GM18951 (cell line): ENCODE measurements at regions of chr16 and their contacts with region 1.

Region 1: GRCh38 chr16:30922960-30923535 is 324 bp upstream of the FBXL19 start:
- POLR2A ChIP-seq: peak; percentile 12

Region 2: DNA sequence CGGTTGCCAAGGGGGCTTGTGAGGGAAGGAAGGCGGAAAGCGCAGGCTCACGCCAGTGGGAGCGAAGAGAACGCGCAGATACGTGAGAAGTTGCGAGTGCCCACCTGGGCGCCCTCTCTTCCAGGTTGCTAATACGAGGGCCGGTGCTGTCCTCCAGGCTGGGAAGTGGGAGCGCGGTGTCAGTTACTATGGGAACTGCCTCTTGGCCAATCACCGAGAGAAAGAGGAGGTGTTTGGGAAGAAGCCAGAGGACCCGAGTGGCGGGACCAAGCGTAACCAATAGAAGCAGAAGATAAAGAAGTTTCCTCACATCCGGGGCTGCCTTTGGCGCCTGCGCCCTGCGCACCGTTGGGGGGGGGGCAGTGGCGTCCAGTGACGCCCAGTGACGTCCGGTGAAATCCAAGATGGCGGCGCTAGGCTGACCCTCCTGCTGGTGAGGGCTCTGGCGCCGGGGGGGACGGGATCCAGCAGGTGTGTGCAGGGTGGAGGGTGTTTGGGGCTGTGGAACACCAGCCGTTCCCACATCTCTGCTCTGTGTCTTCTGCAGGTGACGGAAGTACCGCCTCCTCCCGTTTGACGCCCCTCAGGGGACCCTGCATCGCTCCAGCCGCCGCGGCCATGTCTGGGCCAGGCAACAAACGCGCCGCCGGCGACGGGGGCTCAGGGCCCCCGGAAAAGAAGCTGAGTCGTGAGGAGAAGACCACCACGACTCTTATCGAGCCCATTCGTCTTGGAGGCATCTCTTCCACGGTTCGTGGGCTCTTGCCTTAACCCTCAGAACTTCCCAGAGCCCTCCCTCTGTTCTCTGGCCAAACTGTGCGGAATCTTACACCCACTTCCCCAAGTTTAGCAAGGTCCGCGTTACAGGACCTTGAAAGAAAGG is 160.9 kb before region 1 on chr16 and contains the starts of genes CFAP119 and RNF40:
- in situ Hi-C with region 1: loop called (anchors 10 kb)
- POLR2A ChIP-seq: peak; percentile 89

Region 3: GRCh38 chr16:30853758-30854157 is 69.3 kb before region 1 on chr16:
- in situ Hi-C with region 1: loop called (anchors 5 kb)
- POLR2A ChIP-seq: no peak